ENCODE measurements at regions of chr4 and their contacts with region 1.

Region 1: GRCh38 chr4:164948975-164949374 is 28.5 kb downstream of the TRIM61 start:
- DNase-seq: no peak
- H3K4me3 ChIP-seq: no peak overlapping the region
- H3K4me3 Mint-ChIP-seq: no peak overlapping the region
- H3K27ac ChIP-seq: no peak overlapping the region
- H3K27ac Mint-ChIP-seq: no peak overlapping the region
- H3K4me1 ChIP-seq: no peaks in the 10 kb centered on the region
- H3K4me1 Mint-ChIP-seq: no peaks in the 10 kb centered on the region
- H3K27me3 ChIP-seq: peaks cover 0 to 5% of the 10 kb centered on the region in 2 donors
- H3K27me3 Mint-ChIP-seq: peaks cover 6 to 9% (median 7%) of the 10 kb centered on the region in 3 donors
- CTCF ChIP-seq: no peak

Region 2: GRCh38 chr4:164937576-164938270 is 11.3 kb before region 1 on chr4:
- intact Hi-C with region 1: loop called in 1 of 2 experiments (anchors 1 kb)
- DNase-seq: no peak
- H3K4me3 ChIP-seq: no peak overlapping the region
- H3K4me3 Mint-ChIP-seq: no peak overlapping the region
- H3K27ac ChIP-seq: no peak overlapping the region
- H3K27ac Mint-ChIP-seq: no peak overlapping the region
- H3K4me1 ChIP-seq: no peaks in the 10 kb centered on the region
- H3K4me1 Mint-ChIP-seq: no peaks in the 10 kb centered on the region
- H3K27me3 ChIP-seq: no peaks in the 10 kb centered on the region
- H3K27me3 Mint-ChIP-seq: peaks cover 2 to 6% (median 2%) of the 10 kb centered on the region in 3 donors
- CTCF ChIP-seq: no peak

Measured in CD14-positive monocyte (primary cell).